Right lobe of liver (tissue), 6 donors: ENCODE measurements at regions of chr9 and their contacts with region 1.

Region 1: GRCh38 chr9:38362852-38363593 is 29.5 kb upstream of the ALDH1B1 start:
- DNase-seq: peak in 2 of 3 donors; percentile 47 to 50
- ATAC-seq: peak; percentile 89 to 95 (median 92)
- H3K4me3 ChIP-seq: no peak overlapping the region
- H3K27ac ChIP-seq: no peak overlapping the region
- H3K4me1 ChIP-seq: peaks cover 0 to 4% (median 0%) of the 10 kb centered on the region in 4 donors
- H3K27me3 ChIP-seq: no peaks in the 10 kb centered on the region
- CTCF ChIP-seq: peak; percentile 60 to 71 (median 66)
- POLR2A ChIP-seq: no peak

Region 2: GRCh38 chr9:37876376-37876775 is 486.6 kb before region 1 on chr9:
- intact Hi-C with region 1: no loop called
- DNase-seq: no peak
- ATAC-seq: no peak
- H3K4me3 ChIP-seq: no peak overlapping the region
- H3K27ac ChIP-seq: no peak overlapping the region
- H3K4me1 ChIP-seq: no peaks in the 10 kb centered on the region
- H3K27me3 ChIP-seq: no peaks in the 10 kb centered on the region
- CTCF ChIP-seq: no peak
- POLR2A ChIP-seq: no peak

Region 3: GRCh38 chr9:37920471-37921167 is 442.4 kb before region 1 on chr9:
- intact Hi-C with region 1: loop called in 1 of 2 experiments (anchors 10 kb)
- DNase-seq: peak in 1 of 3 donors; percentile 15
- ATAC-seq: peak in 3 of 4 donors; percentile 9 to 36 (median 27)
- H3K4me3 ChIP-seq: no peak overlapping the region
- H3K27ac ChIP-seq: no peak overlapping the region
- H3K4me1 ChIP-seq: peaks cover 0 to 6% (median 0%) of the 10 kb centered on the region in 4 donors
- H3K27me3 ChIP-seq: no peaks in the 10 kb centered on the region
- CTCF ChIP-seq: no peak
- POLR2A ChIP-seq: no peak

Region 4: GRCh38 chr9:38227061-38227540 is 135.9 kb before region 1 on chr9:
- intact Hi-C with region 1: no loop called
- DNase-seq: peak; percentile 47 to 82 (median 59)
- ATAC-seq: peak; percentile 66 to 97 (median 78)
- H3K4me3 ChIP-seq: no peak overlapping the region
- H3K27ac ChIP-seq: no peak overlapping the region
- H3K4me1 ChIP-seq: no peaks in the 10 kb centered on the region
- H3K27me3 ChIP-seq: no peaks in the 10 kb centered on the region
- CTCF ChIP-seq: no peak
- POLR2A ChIP-seq: no peak

Region 5: GRCh38 chr9:38301376-38302106 is 61.5 kb before region 1 on chr9:
- intact Hi-C with region 1: no loop called
- DNase-seq: no peak
- ATAC-seq: no peak
- H3K4me3 ChIP-seq: no peak overlapping the region
- H3K27ac ChIP-seq: no peak overlapping the region
- H3K4me1 ChIP-seq: no peaks in the 10 kb centered on the region
- H3K27me3 ChIP-seq: no peaks in the 10 kb centered on the region
- CTCF ChIP-seq: no peak
- POLR2A ChIP-seq: no peak

Region 6: GRCh38 chr9:38408719-38409118 is 45.7 kb after region 1 on chr9:
- intact Hi-C with region 1: loop called in 1 of 2 experiments (anchors 5 kb)
- DNase-seq: no peak
- ATAC-seq: no peak
- H3K4me3 ChIP-seq: no peak overlapping the region
- H3K27ac ChIP-seq: no peak overlapping the region
- H3K4me1 ChIP-seq: no peaks in the 10 kb centered on the region
- H3K27me3 ChIP-seq: no peaks in the 10 kb centered on the region
- CTCF ChIP-seq: no peak
- POLR2A ChIP-seq: no peak